Left ventricle myocardium inferior (tissue), 1 donor: ENCODE measurements at regions of chr20 and their contacts with region 1.

Region 1: DNA sequence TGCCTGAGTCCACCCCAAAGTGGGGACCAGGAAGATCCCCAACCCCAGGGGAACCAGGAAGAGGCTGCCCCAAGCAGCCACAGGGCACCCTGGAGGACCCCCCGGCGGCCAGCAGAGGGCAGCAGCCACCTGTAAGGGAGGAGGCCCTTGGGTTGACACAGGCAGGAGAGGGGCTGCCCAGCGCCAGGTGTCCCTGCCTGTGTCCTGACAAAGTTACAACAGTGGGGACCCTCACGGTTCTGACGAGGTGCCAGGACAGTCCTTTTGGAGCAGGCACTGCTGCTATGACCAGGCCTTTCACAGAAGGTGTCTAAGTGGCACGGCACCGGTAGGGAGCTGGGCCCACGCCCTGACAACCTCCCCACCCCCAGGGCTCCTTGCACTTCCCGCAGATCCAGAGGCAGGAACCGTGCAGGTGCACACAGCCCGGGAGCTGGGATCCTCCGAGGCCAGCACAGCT is 176.7 kb downstream of the BMP7 start:
- DNase-seq: peak; percentile 59
- H3K4me3 ChIP-seq: no peak overlapping the region
- H3K27ac ChIP-seq: no peak overlapping the region
- H3K4me1 ChIP-seq: peaks cover 8% of the 10 kb centered on the region
- H3K27me3 ChIP-seq: peaks cover 52% of the 10 kb centered on the region
- CTCF ChIP-seq: peak; percentile 94

Region 2: DNA sequence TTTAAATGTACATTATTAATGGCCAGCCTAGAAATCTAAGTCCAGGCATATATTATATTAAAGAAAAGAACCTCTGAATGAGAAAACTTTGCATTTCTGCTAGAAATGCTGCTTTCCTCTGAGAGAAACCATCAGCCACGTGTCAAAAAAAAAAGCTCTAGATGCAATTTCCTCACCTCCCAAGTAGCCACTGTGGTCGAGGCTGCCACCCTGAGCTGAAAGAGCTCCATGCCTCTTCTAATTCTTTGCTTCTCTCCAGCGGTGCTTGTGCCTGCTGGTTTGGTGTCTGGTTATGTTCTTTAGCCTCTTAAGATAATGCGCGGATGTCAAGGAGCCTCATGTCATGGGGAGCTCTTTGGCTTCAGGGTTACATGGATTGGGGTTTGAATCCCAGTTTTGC is 144.7 kb before region 1 on chr20:
- intact Hi-C with region 1: no loop called
- DNase-seq: no peak
- H3K4me3 ChIP-seq: no peak overlapping the region
- H3K27ac ChIP-seq: no peak overlapping the region
- H3K4me1 ChIP-seq: no peaks in the 10 kb centered on the region
- H3K27me3 ChIP-seq: peaks cover 97% of the 10 kb centered on the region
- CTCF ChIP-seq: no peak

Region 3: GRCh38 chr20:57329608-57330221 is 240.0 kb after region 1 on chr20 and contains the start of gene SPO11:
- intact Hi-C with region 1: loop called (anchors 5 kb)
- DNase-seq: no peak
- H3K4me3 ChIP-seq: no peak within 1 kb of the TSS
- H3K27ac ChIP-seq: no peak within 1 kb of the TSS
- H3K4me1 ChIP-seq: no peaks in the 10 kb centered on the region
- H3K27me3 ChIP-seq: peaks cover 71% of the 10 kb centered on the region
- CTCF ChIP-seq: peak; percentile 53
- total RNA-seq, gene SPO11: not detected

Region 4: GRCh38 chr20:57342829-57343228 is 253.1 kb after region 1 on chr20:
- intact Hi-C with region 1: loop called (anchors 5 kb)
- DNase-seq: no peak
- H3K4me3 ChIP-seq: no peak overlapping the region
- H3K27ac ChIP-seq: no peak overlapping the region
- H3K4me1 ChIP-seq: no peaks in the 10 kb centered on the region
- H3K27me3 ChIP-seq: peaks cover 28% of the 10 kb centered on the region
- CTCF ChIP-seq: no peak